Activated T-helper 2 cell treated with anti-CD3 and anti-CD28 coated beads, Interferon-gamma antibody, Interleukin-2, Interleukin-4, amounts not matched to agents 10 μg/mL and 5 μg/mL and 100 μg/mL, durations not matched to agents 14 hours and 24 hours and 36 hours (primary cell): ENCODE measurements at regions of chr9 and their contacts with region 1.

Region 1: GRCh38 chr9:27529316-27530278 is at the start of gene MOB3B:
- DNase-seq: peak; percentile 62
- H3K4me3 Mint-ChIP-seq: peak within 1 kb of the TSS; percentile 85
- H3K27ac Mint-ChIP-seq: peak within 1 kb of the TSS; percentile 62
- H3K4me1 Mint-ChIP-seq: peaks cover 6% of the 10 kb centered on the region
- H3K27me3 Mint-ChIP-seq: peaks cover 33% of the 10 kb centered on the region
- total RNA-seq, gene MOB3B: 0.94 and 1.3 TPM in 2 replicates

Region 2: GRCh38 chr9:27133817-27134216 is 395.8 kb before region 1 on chr9:
- intact Hi-C with region 1: no loop called
- DNase-seq: no peak
- H3K4me3 Mint-ChIP-seq: no peak overlapping the region
- H3K27ac Mint-ChIP-seq: no peak overlapping the region
- H3K4me1 Mint-ChIP-seq: no peaks in the 10 kb centered on the region
- H3K27me3 Mint-ChIP-seq: no peaks in the 10 kb centered on the region

Region 3: GRCh38 chr9:27353474-27354229 is 175.9 kb before region 1 on chr9:
- intact Hi-C with region 1: loop called (anchors 5 kb)
- DNase-seq: no peak
- H3K4me3 Mint-ChIP-seq: no peak overlapping the region
- H3K27ac Mint-ChIP-seq: no peak overlapping the region
- H3K4me1 Mint-ChIP-seq: peaks cover 41% of the 10 kb centered on the region
- H3K27me3 Mint-ChIP-seq: no peaks in the 10 kb centered on the region

Region 4: GRCh38 chr9:27427273-27427645 is 102.3 kb before region 1 on chr9:
- intact Hi-C with region 1: no loop called
- DNase-seq: no peak
- H3K4me3 Mint-ChIP-seq: no peak overlapping the region
- H3K27ac Mint-ChIP-seq: no peak overlapping the region
- H3K4me1 Mint-ChIP-seq: peaks cover 5% of the 10 kb centered on the region
- H3K27me3 Mint-ChIP-seq: no peaks in the 10 kb centered on the region

Region 5: DNA sequence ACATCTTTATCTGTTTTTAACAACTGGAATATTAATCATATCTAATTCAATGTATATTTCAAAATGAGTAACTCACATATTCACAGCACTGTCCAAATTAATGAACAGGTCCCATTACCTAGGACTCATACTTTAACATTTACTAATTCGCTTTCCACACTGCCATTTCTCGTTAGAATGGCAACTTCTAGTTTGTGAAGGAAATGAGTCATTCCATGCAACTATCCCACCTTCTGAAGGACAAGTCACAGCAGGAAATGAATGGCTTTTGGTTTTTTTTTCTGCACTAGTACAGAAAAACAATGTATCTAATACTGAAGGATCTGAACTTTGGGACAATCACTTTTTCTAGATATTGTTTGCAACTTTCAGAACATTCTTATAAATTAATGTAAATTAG is 30.1 kb before region 1 on chr9:
- intact Hi-C with region 1: loop called (anchors 1 kb)
- DNase-seq: no peak
- H3K4me3 Mint-ChIP-seq: no peak overlapping the region
- H3K27ac Mint-ChIP-seq: peak overlapping the region; percentile 5
- H3K4me1 Mint-ChIP-seq: peaks cover 15% of the 10 kb centered on the region
- H3K27me3 Mint-ChIP-seq: no peaks in the 10 kb centered on the region